H1 (cell line): ENCODE measurements at regions of chr2 and their contacts with region 1.

Region 1: GRCh38 chr2:228657807-228658402 is 476.4 kb upstream of the SPHKAP start:
- DNase-seq: no peak
- H3K4me3 ChIP-seq: no peak overlapping the region
- H3K27ac ChIP-seq: no peak overlapping the region
- H3K4me1 ChIP-seq: no peaks in the 10 kb centered on the region
- H3K27me3 ChIP-seq: no peaks in the 10 kb centered on the region
- CTCF ChIP-seq: peak in 2 of 3 experiments; percentile 48 to 52; a peak in 2 of 4 replicates
- EP300 ChIP-seq: no peak
- POLR2A ChIP-seq: no peak
- RAD21 ChIP-seq: peak; percentile 86 to 89

Region 2: GRCh38 chr2:227939271-227940027 is 718.5 kb before region 1 on chr2:
- CTCF ChIA-PET with region 1: interaction called, 12 read pairs
- POLR2A ChIA-PET with region 1: no interaction called
- DNase-seq: peak; percentile 25 to 50
- H3K4me3 ChIP-seq: no peak overlapping the region
- H3K27ac ChIP-seq: no peak overlapping the region
- H3K4me1 ChIP-seq: peaks cover 0 to 2% (median 0%) of the 10 kb centered on the region in 4 experiments; a peak in 1 of 7 replicates
- H3K27me3 ChIP-seq: no peaks in the 10 kb centered on the region
- CTCF ChIP-seq: peak; percentile 53 to 87 (median 72)
- EP300 ChIP-seq: no peak
- POLR2A ChIP-seq: no peak
- RAD21 ChIP-seq: peak; percentile 85 to 88

Region 3: GRCh38 chr2:228048838-228049490 is 608.9 kb before region 1 on chr2:
- CTCF ChIA-PET with region 1: interaction called, 17 read pairs
- POLR2A ChIA-PET with region 1: no interaction called
- DNase-seq: peak in 1 of 2 experiments; percentile 31
- H3K4me3 ChIP-seq: no peak overlapping the region
- H3K27ac ChIP-seq: no peak overlapping the region
- H3K4me1 ChIP-seq: no peaks in the 10 kb centered on the region
- H3K27me3 ChIP-seq: no peaks in the 10 kb centered on the region
- CTCF ChIP-seq: peak in 2 of 3 experiments; percentile 55 to 81; a peak in 3 of 4 replicates
- EP300 ChIP-seq: no peak
- POLR2A ChIP-seq: no peak
- RAD21 ChIP-seq: peak; percentile 87 to 88

Region 4: DNA sequence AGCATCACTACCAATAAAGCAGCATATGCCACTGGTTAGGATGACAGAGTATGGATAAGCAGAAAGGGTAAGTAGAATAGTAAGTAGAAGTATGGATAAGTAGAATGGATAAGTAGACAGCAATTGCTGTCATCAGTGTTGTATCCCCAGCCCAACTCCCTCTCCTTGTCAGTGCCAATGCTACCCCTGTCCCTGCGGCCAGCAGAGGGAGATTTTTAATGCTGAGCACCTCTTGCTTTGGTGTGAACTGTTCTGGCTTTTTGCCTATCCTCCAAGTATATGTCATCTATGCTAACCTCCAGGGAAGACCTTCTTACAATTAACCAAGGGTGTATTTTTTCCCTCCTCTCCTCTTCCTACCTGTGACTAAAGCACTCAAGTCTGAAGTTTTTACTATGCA is 339.7 kb before region 1 on chr2:
- CTCF ChIA-PET with region 1: interaction called, 10 read pairs
- POLR2A ChIA-PET with region 1: no interaction called
- DNase-seq: peak; percentile 9 to 69
- H3K4me3 ChIP-seq: no peak overlapping the region
- H3K27ac ChIP-seq: no peak overlapping the region
- H3K4me1 ChIP-seq: no peaks in the 10 kb centered on the region
- H3K27me3 ChIP-seq: no peaks in the 10 kb centered on the region
- CTCF ChIP-seq: peak; percentile 71 to 88 (median 85)
- EP300 ChIP-seq: no peak
- POLR2A ChIP-seq: no peak
- RAD21 ChIP-seq: peak; percentile 78 to 85

Region 5: GRCh38 chr2:228575897-228576296 is 82.0 kb before region 1 on chr2:
- CTCF ChIA-PET with region 1: no interaction called
- POLR2A ChIA-PET with region 1: no interaction called
- DNase-seq: no peak
- H3K4me3 ChIP-seq: no peak overlapping the region
- H3K27ac ChIP-seq: no peak overlapping the region
- H3K4me1 ChIP-seq: no peaks in the 10 kb centered on the region
- H3K27me3 ChIP-seq: no peaks in the 10 kb centered on the region
- CTCF ChIP-seq: no peak
- EP300 ChIP-seq: no peak
- POLR2A ChIP-seq: no peak
- RAD21 ChIP-seq: no peak

Region 6: GRCh38 chr2:228669690-228670089 is 11.8 kb after region 1 on chr2:
- CTCF ChIA-PET with region 1: no interaction called
- POLR2A ChIA-PET with region 1: no interaction called
- DNase-seq: no peak
- H3K4me3 ChIP-seq: no peak overlapping the region
- H3K27ac ChIP-seq: no peak overlapping the region
- H3K4me1 ChIP-seq: no peaks in the 10 kb centered on the region
- H3K27me3 ChIP-seq: no peaks in the 10 kb centered on the region
- CTCF ChIP-seq: no peak
- EP300 ChIP-seq: no peak
- POLR2A ChIP-seq: no peak
- RAD21 ChIP-seq: no peak

Region 7: DNA sequence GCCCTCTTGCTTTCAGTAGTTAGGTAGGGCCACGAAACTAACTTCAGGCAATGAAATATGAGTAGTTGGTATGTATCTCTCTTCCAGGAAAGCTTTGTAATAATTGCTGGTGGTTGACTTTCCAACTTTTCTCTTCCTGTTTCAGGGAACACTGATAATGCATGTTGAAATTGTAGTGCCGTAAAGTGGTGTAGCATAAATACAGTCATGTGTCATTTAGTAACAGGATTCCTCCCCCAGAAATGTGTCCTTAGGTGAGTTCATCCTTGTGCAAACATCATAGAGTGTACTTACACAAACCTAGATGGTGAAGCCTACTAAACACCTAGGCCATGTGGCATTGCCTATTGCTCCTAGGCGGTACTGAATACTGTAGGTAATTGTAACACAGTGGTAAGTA is 184.0 kb after region 1 on chr2:
- CTCF ChIA-PET with region 1: no interaction called
- POLR2A ChIA-PET with region 1: no interaction called
- DNase-seq: no peak
- H3K4me3 ChIP-seq: no peak overlapping the region
- H3K27ac ChIP-seq: no peak overlapping the region
- H3K4me1 ChIP-seq: no peaks in the 10 kb centered on the region
- H3K27me3 ChIP-seq: no peaks in the 10 kb centered on the region
- CTCF ChIP-seq: no peak
- EP300 ChIP-seq: no peak
- POLR2A ChIP-seq: no peak
- RAD21 ChIP-seq: no peak